Activated CD8-positive, alpha-beta memory T cell treated with anti-CD3 and anti-CD28 coated beads, Interleukin-2, amount 10 ng/mL, durations not matched to agents 7 days and 5 days (primary cell): ENCODE measurements at regions of chr2 and their contacts with region 1.

Region 1: GRCh38 chr2:231545105-231545902 is 15.1 kb upstream of the NMUR1 start:
- DNase-seq: peak; percentile 97
- ATAC-seq: peak; percentile 94
- H3K4me3 Mint-ChIP-seq: peak overlapping the region; percentile 67
- H3K27ac Mint-ChIP-seq: peak overlapping the region; percentile 99
- H3K4me1 Mint-ChIP-seq: peaks cover 60% of the 10 kb centered on the region
- H3K27me3 Mint-ChIP-seq: no peaks in the 10 kb centered on the region

Region 2: DNA sequence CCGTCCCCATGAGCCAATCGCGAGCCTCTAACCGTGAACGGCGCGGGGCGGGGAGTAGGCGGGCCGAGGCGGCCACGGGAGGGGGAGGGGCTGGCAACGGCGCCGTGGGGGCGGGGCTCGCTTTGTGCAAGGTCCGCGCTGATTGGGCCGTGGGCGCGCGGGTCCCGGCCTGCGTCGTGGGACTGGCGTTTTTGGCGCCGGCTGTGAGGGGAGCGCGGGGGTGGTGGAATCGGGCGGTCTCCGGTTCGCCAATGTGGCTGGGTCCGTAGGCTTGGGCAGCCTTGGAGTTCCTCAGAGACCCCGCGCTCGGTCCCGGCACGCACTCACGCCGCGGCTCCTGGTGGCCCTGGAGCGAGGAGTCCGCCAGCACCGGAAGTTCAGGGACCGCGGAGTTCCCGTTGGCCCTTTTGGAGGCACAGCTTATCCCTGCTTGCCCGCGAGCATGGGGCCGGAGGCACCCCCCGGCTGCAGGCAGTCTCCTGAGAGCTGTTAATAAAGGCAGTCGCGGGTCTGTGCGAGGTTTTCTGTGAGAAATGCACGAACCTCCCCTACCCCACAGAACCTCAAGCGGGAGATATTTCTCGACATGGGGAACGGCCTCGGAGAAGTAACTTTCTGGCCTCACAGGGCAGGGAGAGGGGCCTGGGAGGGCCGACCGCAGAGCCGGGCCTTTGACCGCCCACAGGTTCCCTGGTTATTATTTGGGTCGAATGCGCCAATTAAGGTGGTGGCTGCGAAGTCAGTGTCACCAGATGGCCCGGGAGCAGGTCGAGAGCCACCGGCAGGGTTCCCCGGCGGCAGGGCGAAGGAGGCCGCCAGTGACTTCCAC is 80.5 kb before region 1 on chr2:
- CTCF ChIA-PET with region 1: no interaction called
- DNase-seq: peak; percentile 98
- ATAC-seq: no peak
- H3K4me3 Mint-ChIP-seq: peak overlapping the region; percentile 87
- H3K27ac Mint-ChIP-seq: peak overlapping the region; percentile 100
- H3K4me1 Mint-ChIP-seq: peaks cover 48% of the 10 kb centered on the region
- H3K27me3 Mint-ChIP-seq: no peaks in the 10 kb centered on the region

Region 3: GRCh38 chr2:231522799-231523180 is 22.5 kb before region 1 on chr2:
- CTCF ChIA-PET with region 1: interaction called, 22 read pairs
- DNase-seq: no peak
- ATAC-seq: no peak
- H3K4me3 Mint-ChIP-seq: no peak overlapping the region
- H3K27ac Mint-ChIP-seq: no peak overlapping the region
- H3K4me1 Mint-ChIP-seq: peaks cover 62% of the 10 kb centered on the region
- H3K27me3 Mint-ChIP-seq: peaks cover 19% of the 10 kb centered on the region

Region 4: DNA sequence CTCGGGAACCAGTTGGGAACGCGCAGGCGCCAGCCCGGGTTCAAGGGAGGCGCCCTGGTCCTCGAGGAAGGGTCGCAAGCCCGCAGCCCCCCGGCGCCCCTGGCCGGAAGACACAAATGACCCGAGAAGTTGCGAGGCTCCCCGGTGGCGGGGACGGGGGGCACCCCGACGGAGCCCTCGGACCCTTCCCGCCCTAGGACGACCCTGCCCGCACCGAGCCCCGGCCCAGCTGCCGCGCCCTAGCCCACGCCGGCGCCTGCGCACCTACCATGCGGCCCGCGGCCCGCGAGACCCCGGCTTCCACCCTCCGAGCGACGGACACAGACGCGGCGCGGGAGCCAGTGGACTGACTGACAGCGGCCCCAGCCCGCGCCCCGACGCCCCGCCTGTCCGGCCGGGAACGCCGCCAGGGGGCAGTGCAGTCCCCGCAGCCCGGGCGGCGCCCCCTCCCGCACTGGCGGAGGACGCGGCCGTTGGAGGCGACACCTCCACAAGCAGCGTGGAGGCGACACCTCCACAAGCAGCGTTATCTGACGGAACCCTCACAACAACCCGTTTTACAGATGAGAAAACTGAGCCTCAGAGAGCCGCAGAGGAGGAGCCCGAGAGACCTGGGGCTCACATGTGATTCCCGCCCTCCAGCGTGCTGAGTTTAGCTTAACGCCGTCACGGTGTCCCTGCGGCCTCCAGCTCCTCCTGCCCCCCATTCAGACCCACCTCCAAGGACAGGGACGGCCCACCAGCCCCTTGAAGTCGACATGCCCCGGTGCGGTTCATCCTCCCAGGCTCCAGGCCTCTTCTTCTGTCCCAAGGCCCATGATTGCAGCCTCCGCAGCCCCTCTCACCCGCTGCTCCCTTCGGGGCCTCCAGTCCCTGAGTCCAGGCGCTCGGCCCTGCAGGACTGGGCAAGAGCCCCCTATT is 15.0 kb before region 1 on chr2 and contains the start of gene NMUR1:
- CTCF ChIA-PET with region 1: interaction called, 48 read pairs
- DNase-seq: peak; percentile 82
- ATAC-seq: peak; percentile 94
- H3K4me3 Mint-ChIP-seq: peak within 1 kb of the TSS; percentile 70
- H3K27ac Mint-ChIP-seq: peak within 1 kb of the TSS; percentile 60
- H3K4me1 Mint-ChIP-seq: peaks cover 51% of the 10 kb centered on the region
- H3K27me3 Mint-ChIP-seq: peaks cover 40% of the 10 kb centered on the region
- total RNA-seq, gene NMUR1: 3.6 to 8.6 TPM